PC-3 (cell line): ENCODE measurements at regions of chr15 and their contacts with region 1.

Region 1: GRCh38 chr15:73972984-73973682 is 19.0 kb downstream of the STOML1 start:
- DNase-seq: peak; percentile 89
- ATAC-seq: peak; percentile 87
- H3K4me3 ChIP-seq: peak overlapping the region; percentile 61
- H3K27ac ChIP-seq: no peak overlapping the region
- H3K4me1 ChIP-seq: peaks cover 12% of the 10 kb centered on the region
- H3K27me3 ChIP-seq: no peaks in the 10 kb centered on the region
- CTCF ChIP-seq: peak; percentile 81

Region 2: DNA sequence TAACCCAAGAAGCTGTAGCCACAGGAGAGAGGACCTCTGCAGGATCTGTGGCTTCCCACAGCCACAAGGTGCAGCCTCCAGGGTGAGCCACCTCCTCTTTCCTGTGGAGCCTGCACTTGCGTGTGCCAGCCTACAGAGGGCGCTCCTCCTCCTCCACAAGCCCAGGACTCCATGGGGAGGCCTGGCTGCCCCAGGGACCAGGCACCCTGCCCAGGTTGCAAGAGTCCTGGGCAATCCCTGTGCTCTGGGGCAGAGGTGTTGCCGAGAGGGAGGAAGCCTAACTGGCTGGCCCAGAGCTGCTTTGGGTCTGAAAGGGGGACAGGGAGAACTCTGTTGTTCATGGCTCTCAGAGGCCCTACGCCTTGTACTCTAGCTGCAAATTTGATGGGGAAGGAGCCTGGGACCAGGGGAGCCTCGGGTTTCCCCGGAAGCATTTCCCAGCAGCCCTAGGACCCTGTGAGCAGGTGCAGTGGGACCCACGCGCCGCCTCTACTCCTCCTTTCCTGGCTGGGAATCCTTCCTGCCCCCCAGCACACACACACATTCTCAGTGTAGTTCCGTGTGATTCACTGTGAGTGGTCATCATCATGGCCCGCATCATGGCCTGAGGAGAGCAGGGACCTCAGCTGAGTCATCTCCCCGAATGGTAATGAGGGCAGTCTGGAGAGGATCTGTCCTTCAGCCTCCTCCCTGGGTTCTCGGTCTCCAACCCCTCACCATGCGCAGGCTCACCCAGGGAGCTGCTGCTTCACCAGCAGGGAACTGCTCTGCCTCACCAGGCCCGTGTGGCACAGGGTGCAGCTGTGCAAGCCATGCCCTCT is 75.5 kb before region 1 on chr15:
- CTCF ChIA-PET with region 1: no interaction called
- POLR2A ChIA-PET with region 1: interaction called, 15 read pairs
- intact Hi-C with region 1: no loop called
- DNase-seq: peak; percentile 90
- ATAC-seq: peak; percentile 81
- H3K4me3 ChIP-seq: no peak overlapping the region
- H3K27ac ChIP-seq: peak overlapping the region; percentile 92
- H3K4me1 ChIP-seq: peaks cover 37% of the 10 kb centered on the region
- H3K27me3 ChIP-seq: no peaks in the 10 kb centered on the region
- CTCF ChIP-seq: peak; percentile 98

Region 3: GRCh38 chr15:73991726-73992593 is 18.8 kb after region 1 on chr15 and contains the start of gene STOML1:
- CTCF ChIA-PET with region 1: interaction called, 5 read pairs
- POLR2A ChIA-PET with region 1: interaction called, 4 read pairs
- intact Hi-C with region 1: loop called (anchors 1 kb)
- DNase-seq: peak; percentile 95
- ATAC-seq: peak; percentile 68
- H3K4me3 ChIP-seq: peak within 1 kb of the TSS; percentile 85
- H3K27ac ChIP-seq: no peak within 1 kb of the TSS
- H3K4me1 ChIP-seq: peaks cover 59% of the 10 kb centered on the region
- H3K27me3 ChIP-seq: no peaks in the 10 kb centered on the region
- CTCF ChIP-seq: peak; percentile 79
- total RNA-seq, gene STOML1: 10.1 and 12.0 TPM in 2 replicates

Region 4: GRCh38 chr15:74036271-74037170 is 63.4 kb after region 1 on chr15:
- CTCF ChIA-PET with region 1: interaction called, 43 read pairs
- POLR2A ChIA-PET with region 1: interaction called, 4 read pairs
- intact Hi-C with region 1: loop called (anchors 1 kb)
- DNase-seq: peak; percentile 69
- ATAC-seq: peak; percentile 62
- H3K4me3 ChIP-seq: no peak overlapping the region
- H3K27ac ChIP-seq: no peak overlapping the region
- H3K4me1 ChIP-seq: peaks cover 8% of the 10 kb centered on the region; the same call in 1 of the 2 replicates
- H3K27me3 ChIP-seq: no peaks in the 10 kb centered on the region
- CTCF ChIP-seq: peak; percentile 67

Region 5: DNA sequence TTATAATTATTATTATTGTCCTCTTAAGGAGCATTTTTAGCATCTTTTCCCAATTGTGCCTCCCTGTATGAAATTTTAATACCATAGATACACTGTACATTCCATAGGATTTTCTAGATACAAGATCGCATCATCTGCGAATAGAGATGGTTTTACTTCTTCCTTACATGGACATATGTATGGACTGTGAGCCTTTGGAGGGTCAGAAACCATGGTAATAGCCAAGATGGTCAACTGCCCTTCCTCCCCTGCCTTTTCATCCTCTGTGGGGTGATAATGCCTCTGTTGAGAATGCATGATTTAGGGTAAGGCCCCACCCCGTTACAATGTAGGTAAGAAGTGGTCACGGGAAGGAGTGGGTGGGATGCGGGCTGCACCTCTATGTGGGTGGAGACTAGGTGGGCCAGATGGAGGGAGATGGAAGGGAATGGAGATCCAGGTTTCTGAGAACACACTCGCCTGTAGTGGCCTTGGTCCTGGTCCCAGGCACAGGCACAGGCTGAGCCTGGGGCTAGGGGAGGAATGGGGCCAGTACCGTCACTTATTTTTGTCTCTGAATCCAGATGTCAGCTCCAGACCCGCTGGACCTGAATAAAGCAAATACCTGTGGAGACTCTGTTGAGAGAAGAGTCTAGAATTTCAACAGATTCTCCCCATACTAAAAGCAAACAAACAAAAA is 77.6 kb after region 1 on chr15:
- CTCF ChIA-PET with region 1: interaction called, 16 read pairs
- POLR2A ChIA-PET with region 1: no interaction called
- intact Hi-C with region 1: no loop called
- DNase-seq: no peak
- ATAC-seq: no peak
- H3K4me3 ChIP-seq: no peak overlapping the region
- H3K27ac ChIP-seq: no peak overlapping the region
- H3K4me1 ChIP-seq: peaks cover 9% of the 10 kb centered on the region
- H3K27me3 ChIP-seq: no peaks in the 10 kb centered on the region
- CTCF ChIP-seq: no peak

Region 6: GRCh38 chr15:74307827-74308644 is 334.9 kb after region 1 on chr15:
- CTCF ChIA-PET with region 1: interaction called, 6 read pairs
- POLR2A ChIA-PET with region 1: no interaction called
- intact Hi-C with region 1: loop called (anchors 10 kb)
- DNase-seq: peak; percentile 76
- ATAC-seq: peak; percentile 87
- H3K4me3 ChIP-seq: no peak overlapping the region
- H3K27ac ChIP-seq: no peak overlapping the region
- H3K4me1 ChIP-seq: no peaks in the 10 kb centered on the region
- H3K27me3 ChIP-seq: peaks cover 7% of the 10 kb centered on the region
- CTCF ChIP-seq: peak; percentile 78